Body of pancreas (tissue), 4 donors: ENCODE measurements at regions of chrX and their contacts with region 1.

Region 1: DNA sequence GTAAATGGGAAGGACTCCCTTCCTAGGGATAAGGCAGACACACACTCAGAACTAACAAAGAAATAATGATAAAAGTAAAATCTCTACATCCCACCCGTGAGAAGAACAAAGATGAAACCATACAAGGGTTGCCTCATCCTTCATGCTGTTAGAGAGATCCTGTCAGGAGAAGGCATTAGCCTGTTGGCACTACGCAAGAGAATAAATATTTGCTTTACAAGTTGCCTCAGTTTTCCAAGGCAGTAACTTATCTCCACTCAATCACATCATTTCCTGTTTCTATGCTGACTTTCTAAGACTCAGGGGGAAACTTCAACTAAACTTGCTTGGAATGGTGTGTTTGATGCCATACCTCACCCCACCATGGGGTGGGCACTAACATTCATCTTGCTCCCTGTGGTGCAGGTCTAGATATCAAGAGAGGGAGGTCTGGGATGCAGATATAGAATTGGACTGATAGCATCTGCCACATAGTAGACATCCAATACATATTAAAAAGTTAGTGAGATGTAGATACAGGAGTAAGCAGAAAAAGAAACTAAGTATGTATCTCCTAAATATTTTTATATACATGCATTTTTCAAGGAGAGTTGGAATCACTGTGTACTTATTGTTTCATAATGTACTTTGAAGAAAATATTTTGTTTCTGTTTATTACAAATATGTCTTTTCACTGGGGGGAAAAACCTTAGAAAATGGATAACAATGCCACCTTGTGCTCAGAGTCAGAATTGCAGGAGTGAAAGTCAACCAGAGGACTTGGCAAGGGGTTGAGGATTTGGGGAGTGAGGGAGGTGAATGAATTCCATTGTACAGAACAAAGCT is 57.2 kb upstream of the BEX4 start:
- DNase-seq: peak; percentile 17 to 51 (median 38)
- ATAC-seq: peak; percentile 56
- H3K4me3 ChIP-seq: no peak overlapping the region
- H3K27ac ChIP-seq: no peak overlapping the region
- H3K4me1 ChIP-seq: no peaks in the 10 kb centered on the region
- H3K27me3 ChIP-seq: no peaks in the 10 kb centered on the region
- CTCF ChIP-seq: peak; percentile 45 to 66 (median 59)
- POLR2A ChIP-seq: no peak

Region 2: DNA sequence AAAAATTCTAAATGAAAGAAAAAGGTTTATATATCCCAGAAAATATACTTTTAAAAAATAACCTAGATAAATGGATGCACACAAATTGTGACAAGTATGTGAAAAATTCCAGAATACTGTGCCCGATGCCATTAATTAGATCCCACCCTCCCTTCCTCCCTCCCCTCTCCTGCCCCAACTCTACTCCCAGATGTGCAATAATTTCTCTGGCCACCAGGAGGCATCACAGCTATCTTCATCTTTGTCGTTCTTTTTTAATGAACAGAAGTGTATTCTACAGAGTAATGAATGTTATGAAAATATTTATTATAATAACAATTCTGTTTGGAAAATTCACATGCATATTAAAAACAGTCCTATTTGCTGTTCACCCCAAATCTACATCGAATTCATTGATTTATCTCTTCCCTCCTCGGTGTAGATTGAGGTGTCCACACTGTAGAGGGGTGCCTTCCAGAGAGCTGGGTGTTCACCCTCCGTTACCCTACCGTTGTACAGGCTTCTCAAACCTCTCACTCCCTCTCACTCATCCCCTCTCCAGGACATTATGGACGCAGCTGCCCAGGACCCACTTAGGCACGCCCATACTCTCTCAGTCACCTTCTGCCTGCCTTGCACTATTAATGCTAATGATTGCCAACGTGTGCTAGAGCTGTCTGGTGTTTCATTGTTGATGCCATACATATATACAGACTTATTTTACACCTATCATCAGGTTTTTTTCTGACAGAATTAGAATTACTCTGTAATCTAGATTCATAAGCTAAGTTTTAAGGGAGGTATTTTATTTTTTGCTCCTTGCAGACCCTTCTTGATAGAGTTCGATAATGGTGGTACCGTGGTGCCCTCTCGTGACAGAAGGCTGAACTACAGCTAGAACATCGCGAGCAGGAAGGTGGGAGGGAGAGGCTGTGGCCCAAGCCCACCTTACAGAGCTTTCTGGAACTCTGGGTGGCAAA is 206.5 kb before region 1 on chrX:
- intact Hi-C with region 1: loop called (anchors 10 kb)
- DNase-seq: peak; percentile 46 to 77 (median 57)
- ATAC-seq: peak; percentile 66
- H3K4me3 ChIP-seq: no peak overlapping the region
- H3K27ac ChIP-seq: no peak overlapping the region
- H3K4me1 ChIP-seq: no peaks in the 10 kb centered on the region
- H3K27me3 ChIP-seq: no peaks in the 10 kb centered on the region
- CTCF ChIP-seq: peak; percentile 32 to 60 (median 47)
- POLR2A ChIP-seq: no peak

Region 3: DNA sequence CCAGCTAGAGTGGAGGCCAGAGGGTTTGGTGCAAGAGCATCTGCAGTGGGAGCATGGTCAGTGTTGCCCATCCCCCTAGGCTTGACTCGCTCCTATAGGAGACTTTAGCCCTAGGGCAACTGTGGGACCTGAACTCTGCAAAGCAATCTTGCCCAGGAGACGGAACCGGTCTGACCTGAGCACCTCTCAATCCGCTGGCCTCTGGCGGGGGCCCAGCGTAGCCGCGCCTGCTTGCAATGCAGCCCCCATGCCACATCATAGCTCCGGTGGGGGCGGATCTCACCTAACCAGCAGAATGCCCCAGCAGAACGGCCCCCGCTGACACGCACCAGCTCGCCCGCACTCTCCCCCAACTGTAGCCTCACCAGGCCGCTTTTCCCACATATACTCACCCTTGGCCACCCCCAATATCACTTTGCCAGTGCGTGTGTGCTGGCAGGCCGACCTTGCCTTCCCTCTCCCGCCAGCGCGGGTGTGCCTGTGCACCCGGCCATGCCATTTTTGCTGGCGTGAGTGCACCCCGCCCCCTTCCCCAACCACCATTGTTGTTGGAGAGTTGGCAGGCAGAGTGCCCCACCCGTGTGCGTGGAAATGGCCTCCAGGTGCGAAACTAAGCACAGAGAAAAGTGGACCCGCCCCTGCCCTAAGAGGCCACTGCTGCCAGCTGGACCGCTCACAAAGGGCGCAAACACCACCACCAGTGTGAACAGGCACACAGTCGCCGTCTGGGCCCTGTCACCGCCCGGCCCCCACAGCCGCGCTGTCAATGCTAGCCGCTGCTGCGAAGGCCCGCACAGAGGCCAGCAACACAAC is 63.0 kb after region 1 on chrX:
- intact Hi-C with region 1: no loop called
- DNase-seq: peak in 2 of 4 donors; percentile 10 to 16
- ATAC-seq: no peak
- H3K4me3 ChIP-seq: no peak overlapping the region
- H3K27ac ChIP-seq: no peak overlapping the region
- H3K4me1 ChIP-seq: no peaks in the 10 kb centered on the region
- H3K27me3 ChIP-seq: no peaks in the 10 kb centered on the region
- CTCF ChIP-seq: no peak
- POLR2A ChIP-seq: no peak